ENCODE measurements at regions of chr1 and their contacts with region 1.

Region 1: DNA sequence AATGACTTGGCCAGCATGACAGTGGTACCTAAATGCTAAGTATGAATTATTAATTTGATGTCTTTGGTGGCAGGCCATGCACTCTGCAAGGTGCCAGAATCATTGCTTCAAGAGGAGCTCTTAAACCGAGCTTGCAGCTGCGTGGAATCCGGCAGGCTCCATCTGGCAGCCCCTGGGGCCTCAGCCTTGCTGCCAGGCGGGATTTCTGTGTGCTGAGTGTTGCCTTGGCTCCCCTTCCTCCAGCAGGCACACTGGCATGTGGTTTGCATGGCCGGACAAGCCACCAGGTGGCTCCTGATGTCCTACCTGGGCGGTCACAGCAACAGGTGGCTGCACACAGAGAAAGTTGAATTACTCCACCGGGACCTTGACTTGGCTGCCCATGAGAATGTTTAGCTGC is 155.4 kb downstream of the URB2 start:
- DNase-seq: peak; percentile 68
- H3K4me3 Mint-ChIP-seq: no peak overlapping the region
- H3K27ac Mint-ChIP-seq: no peak overlapping the region
- H3K4me1 Mint-ChIP-seq: no peaks in the 10 kb centered on the region
- H3K27me3 Mint-ChIP-seq: peaks cover 69% of the 10 kb centered on the region
- CTCF ChIP-seq: peak; percentile 27

Region 2: DNA sequence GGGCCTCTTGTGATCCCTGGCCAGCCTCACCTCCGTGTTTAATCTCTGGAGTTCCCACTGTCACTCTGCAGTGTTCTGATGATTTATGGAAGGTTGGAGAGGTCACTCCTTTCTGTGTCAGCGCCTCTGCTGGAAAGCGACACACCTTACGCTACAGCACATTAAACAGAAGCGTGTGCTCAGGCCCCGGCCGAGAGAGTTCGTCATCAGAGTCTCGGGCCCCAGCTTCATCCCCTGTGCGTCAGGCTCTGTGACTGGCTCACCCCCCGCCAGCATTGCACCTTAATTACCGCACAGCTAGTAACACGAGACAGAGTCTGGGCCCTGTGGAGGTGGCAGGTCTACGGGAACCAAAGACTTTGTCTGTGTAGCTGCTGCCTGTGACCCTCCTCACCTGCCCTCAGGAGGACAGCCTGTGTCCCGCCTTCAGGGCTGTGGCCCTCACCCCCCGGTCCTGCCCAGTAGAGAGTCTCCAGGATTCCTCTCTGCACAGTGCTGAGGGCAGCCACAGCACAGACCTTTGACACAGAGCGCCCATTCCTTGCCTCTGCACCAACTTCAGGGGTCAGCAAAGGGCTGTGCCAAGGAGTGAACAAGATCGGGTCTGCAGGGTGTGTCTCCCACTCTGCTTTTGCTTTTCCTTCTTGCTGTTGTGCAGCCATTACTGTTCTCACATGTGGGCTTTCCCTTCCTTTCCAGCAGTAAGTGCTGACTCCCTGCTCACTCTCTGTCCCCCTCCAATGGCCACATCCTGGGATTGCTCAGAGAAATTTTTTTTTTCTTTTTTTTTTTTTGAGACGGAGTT is 487.1 kb after region 1 on chr1:
- CTCF ChIA-PET with region 1: no interaction called
- intact Hi-C with region 1: loop called (anchors 2 kb)
- DNase-seq: peak; percentile 57
- H3K4me3 Mint-ChIP-seq: no peak overlapping the region
- H3K27ac Mint-ChIP-seq: no peak overlapping the region
- H3K4me1 Mint-ChIP-seq: no peaks in the 10 kb centered on the region
- H3K27me3 Mint-ChIP-seq: no peaks in the 10 kb centered on the region
- CTCF ChIP-seq: peak; percentile 52

Region 3: DNA sequence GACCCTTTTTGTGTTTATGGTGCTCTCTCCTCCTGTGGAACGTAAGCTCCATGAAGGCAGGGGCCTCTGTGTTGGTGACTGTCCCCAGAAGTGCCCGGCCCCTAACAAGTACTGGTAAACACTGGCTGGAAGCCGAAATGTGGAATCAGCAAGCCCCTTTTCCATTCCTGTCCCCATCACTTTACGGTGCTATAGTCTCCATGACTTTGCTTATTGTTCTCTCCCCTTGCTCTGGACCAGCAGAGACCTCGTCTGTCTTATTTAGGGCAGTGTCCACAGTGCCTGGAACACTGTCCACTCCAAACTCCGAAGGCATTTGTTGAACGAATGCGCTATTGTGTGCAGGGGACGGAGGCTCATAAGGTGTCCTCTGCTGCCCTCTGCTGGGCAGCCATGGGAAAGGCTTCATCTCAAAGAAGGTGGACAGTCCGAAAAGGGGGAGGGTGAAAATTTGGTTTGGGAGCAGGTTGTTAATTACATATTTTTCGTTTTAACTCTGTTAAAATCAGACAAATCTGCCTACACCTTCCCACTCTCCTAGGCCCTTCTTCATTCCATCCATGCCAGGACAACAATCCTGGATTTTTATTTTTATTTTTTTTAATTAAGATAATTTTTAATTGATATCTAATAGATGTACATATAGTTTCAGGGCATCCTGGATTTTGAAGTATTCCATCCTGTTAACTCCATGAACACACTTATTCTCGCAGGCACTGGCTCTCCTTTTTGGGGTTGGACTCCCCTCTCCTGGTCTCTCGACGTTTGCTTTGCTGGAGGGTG is 529.1 kb after region 1 on chr1:
- CTCF ChIA-PET with region 1: interaction called, 4 read pairs
- intact Hi-C with region 1: loop called (anchors 1 kb)
- DNase-seq: peak; percentile 82
- H3K4me3 Mint-ChIP-seq: no peak overlapping the region
- H3K27ac Mint-ChIP-seq: peak overlapping the region; percentile 7
- H3K4me1 Mint-ChIP-seq: peaks cover 36% of the 10 kb centered on the region
- H3K27me3 Mint-ChIP-seq: no peaks in the 10 kb centered on the region
- CTCF ChIP-seq: peak; percentile 79